ENCODE measurements at regions of chr16 and their contacts with region 1.

Region 1: DNA sequence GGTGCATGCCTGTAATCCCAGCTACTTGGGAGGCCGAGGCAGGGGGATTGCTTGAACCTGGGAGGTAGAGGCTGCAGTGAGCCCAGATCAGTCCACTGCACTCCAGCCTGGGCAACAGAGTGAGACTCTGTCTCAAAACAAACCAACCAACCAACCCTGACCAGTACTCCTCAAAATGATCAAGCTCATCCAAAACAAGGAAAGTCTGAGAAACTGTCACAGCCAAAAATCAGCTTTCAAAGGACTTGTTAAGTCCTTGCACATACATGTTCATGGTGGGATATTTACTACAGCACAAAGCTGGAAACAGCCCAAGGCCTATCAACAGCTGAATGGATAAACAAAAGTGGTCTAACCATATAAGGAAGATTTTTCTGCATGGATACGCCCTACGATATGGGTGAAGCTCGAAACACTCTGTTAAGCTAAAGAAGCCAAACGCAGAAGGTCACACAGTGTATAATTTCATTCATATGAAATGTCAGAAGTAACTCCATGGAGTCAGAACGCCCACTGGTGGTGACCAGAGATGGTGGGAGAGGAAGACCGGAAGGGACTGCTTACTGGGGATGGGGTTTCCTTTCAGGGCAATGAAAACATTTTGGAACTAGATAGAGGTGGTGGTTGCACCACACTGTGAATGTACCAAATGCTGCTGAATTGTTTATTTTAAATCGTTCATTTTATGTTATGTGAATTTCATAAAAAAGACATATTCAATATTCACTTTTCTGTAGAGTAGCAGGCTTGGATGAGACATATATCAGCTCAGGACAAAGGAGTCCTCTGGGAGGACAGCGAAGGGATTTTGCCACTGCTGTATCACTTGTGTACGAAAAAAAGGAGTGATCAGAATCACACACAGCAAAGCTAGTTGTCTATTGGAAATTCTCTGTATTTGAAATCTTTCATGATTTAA is 17.7 kb downstream of the CCL17 start:
- DNase-seq: peak; percentile 65 to 81
- H3K4me3 ChIP-seq: no peak overlapping the region
- H3K27ac ChIP-seq: peak overlapping the region; percentile 8 to 31
- H3K4me1 ChIP-seq: peaks cover 7 to 38% (median 22%) of the 10 kb centered on the region in 4 donors
- H3K27me3 ChIP-seq: no peaks in the 10 kb centered on the region
- CTCF ChIP-seq: peak; percentile 75 to 78

Region 2: GRCh38 chr16:57013229-57013628 is 409.1 kb before region 1 on chr16:
- intact Hi-C with region 1: no loop called
- DNase-seq: no peak
- H3K4me3 ChIP-seq: no peak overlapping the region
- H3K27ac ChIP-seq: no peak overlapping the region
- H3K4me1 ChIP-seq: no peaks in the 10 kb centered on the region
- H3K27me3 ChIP-seq: no peaks in the 10 kb centered on the region
- CTCF ChIP-seq: no peak

Region 3: DNA sequence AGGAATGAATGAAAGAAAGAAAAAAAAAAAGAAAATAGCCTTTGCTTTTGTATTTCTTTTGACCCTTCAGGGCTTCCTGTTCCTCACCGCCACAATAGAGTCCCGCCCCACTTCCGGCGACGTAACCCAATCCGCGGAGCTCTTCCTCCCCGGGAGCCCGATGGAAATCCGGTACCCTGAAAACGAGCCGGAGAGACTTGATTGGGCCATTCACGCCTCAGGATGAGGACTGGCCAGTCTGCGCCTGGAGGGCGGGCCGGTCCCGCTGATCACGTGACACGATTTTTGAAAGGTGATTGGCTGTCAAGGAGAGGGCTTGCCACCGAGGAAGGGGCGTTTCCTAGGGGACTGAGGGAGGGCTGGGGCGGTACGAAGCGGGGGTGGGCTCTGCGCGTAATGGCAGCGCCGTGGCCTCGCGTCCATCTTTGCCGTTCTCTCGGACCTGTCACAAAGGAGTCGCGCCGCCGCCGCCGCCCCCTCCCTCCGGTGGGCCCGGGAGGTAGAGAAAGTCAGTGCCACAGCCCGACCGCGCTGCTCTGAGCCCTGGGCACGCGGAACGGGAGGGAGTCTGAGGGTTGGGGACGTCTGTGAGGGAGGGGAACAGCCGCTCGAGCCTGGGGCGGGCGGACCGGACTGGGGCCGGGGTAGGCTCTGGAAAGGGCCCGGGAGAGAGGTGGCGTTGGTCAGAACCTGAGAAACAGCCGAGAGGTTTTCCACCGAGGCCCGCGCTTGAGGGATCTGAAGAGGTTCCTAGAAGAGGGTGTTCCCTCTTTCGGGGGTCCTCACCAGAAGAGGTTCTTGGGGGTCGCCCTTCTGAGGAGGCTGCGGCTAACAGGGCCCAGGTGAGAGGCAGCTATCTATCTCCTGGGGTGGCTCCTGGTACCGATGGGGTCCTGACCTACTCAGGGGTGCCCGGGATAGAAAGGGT is 236.1 kb before region 1 on chr16 and contains the starts of genes PSME3IP1 and RSPRY1:
- intact Hi-C with region 1: loop called (anchors 10 kb)
- DNase-seq: peak; percentile 98 to 99
- H3K4me3 ChIP-seq: peak within 1 kb of the TSS; percentile 76 to 96
- H3K27ac ChIP-seq: peak within 1 kb of the TSS; percentile 97 to 98
- H3K4me1 ChIP-seq: peaks cover 0 to 46% (median 31%) of the 10 kb centered on the region in 4 donors
- H3K27me3 ChIP-seq: no peaks in the 10 kb centered on the region
- CTCF ChIP-seq: no peak

Region 4: DNA sequence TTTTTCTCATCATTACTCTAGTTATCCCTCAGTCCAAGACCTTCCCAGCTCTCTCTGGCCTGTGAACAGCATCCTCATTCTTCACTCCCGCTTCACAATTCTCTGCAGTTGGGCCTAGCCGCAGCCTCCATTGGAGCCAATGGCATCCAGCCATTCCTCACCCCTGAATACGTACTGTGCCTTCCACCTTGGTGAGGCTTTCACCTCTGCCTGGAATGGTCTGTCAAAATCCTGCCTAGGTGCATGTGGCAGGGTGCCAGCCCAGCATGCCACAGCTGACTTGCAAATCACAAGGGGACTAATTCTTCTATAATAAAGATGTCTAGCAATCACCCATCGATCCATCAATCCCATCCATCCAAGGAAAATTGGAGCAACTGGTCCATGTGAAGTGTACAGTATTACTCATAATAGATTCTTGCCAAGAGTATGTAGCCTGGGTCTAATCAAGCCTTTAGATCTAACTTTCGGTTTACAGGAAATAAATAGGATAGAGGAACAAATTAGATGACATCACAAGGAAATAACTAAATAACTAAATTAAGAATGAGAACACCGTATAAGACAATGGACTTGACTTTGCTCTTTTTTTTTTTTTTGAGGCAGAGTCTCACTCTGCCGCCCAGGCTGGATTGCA is 55.1 kb before region 1 on chr16:
- intact Hi-C with region 1: no loop called
- DNase-seq: peak in 1 of 2 donors; percentile 34
- H3K4me3 ChIP-seq: no peak overlapping the region
- H3K27ac ChIP-seq: no peak overlapping the region
- H3K4me1 ChIP-seq: peaks cover 0 to 14% (median 14%) of the 10 kb centered on the region in 4 donors
- H3K27me3 ChIP-seq: no peaks in the 10 kb centered on the region
- CTCF ChIP-seq: no peak

Region 5: DNA sequence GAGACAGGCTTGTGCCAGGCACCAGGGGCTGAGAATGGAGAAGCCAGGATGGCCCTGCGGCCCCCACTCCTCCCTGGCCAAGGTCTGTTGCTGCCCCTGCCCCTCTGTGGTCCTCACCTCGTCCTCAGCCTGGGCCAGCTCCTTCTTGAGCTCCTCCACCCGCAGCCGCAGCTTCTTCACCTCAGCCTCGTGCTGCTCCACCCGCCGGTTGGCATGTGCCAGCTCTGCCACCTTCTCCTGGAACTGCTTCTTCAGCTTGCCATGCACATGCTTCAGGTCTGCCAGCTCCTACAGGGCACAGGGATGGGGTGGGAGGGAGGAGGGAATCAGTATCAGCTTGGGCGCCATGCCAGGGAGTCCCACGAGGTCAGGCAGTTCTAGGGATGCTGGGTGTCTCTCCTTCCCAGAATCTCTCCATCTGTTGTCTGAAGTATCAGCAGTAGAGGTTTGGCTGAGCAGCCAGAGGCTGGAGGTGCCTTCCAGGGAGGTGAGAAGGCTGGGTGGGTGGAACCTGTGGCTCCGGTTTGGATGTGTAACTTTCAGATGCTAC is 94.0 kb after region 1 on chr16:
- intact Hi-C with region 1: loop called (anchors 2 kb)
- DNase-seq: no peak
- H3K4me3 ChIP-seq: no peak overlapping the region
- H3K27ac ChIP-seq: no peak overlapping the region
- H3K4me1 ChIP-seq: peaks cover 0 to 7% (median 3%) of the 10 kb centered on the region in 4 donors
- H3K27me3 ChIP-seq: no peaks in the 10 kb centered on the region
- CTCF ChIP-seq: no peak

Region 6: GRCh38 chr16:58551496-58551895 is 1129.2 kb after region 1 on chr16:
- intact Hi-C with region 1: no loop called
- DNase-seq: no peak
- H3K4me3 ChIP-seq: no peak overlapping the region
- H3K27ac ChIP-seq: no peak overlapping the region
- H3K4me1 ChIP-seq: no peaks in the 10 kb centered on the region
- H3K27me3 ChIP-seq: no peaks in the 10 kb centered on the region
- CTCF ChIP-seq: no peak